Cardiac septum (tissue), 1 donor: ENCODE measurements at regions of chr6 and their contacts with region 1.

Region 1: GRCh38 chr6:100116411-100117194 is 122.6 kb upstream of the MCHR2 start:
- DNase-seq: no peak

Region 2: GRCh38 chr6:100479179-100480035 is 362.8 kb after region 1 on chr6:
- intact Hi-C with region 1: loop called (anchors 5 kb)
- DNase-seq: no peak

Region 3: GRCh38 chr6:100664274-100665040 is 547.9 kb after region 1 on chr6:
- intact Hi-C with region 1: loop called (anchors 10 kb)
- DNase-seq: no peak